Motor neuron (in vitro differentiated cells): ENCODE measurements at regions of chr21 and their contacts with region 1.

Region 1: DNA sequence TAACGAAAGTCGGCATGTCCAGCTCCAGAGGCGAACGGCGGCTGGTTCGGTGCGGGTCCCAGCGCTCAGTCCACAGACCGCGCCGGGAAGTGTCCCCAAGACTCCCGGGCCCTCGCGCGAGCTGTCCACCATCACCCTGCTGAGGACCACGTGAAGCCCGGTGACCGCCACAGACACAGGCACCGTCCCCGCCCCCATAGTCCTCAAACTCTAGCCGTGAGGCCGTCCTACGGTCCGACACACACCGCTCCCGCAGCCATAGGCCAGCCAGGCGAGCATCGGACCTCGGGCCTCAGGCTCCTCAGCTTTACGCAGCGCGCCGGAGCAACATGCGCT is 535 bp downstream of the SETD4 start:
- ATAC-seq: peak; percentile 54 to 71 (median 66)
- H3K4me3 ChIP-seq: peak overlapping the region; percentile 48 to 80 (median 63)
- H3K27ac ChIP-seq: peak overlapping the region; percentile 83 to 89
- H3K4me1 ChIP-seq: peaks cover 5 to 11% of the 10 kb centered on the region in 2 donors

Region 2: GRCh38 chr21:36113647-36114428 is 54.0 kb after region 1 on chr21:
- in situ Hi-C with region 1: loop called in 1 of 9 experiments (anchors 10 kb)
- ATAC-seq: no peak
- H3K4me3 ChIP-seq: no peak overlapping the region
- H3K27ac ChIP-seq: no peak overlapping the region
- H3K4me1 ChIP-seq: no peaks in the 10 kb centered on the region

Region 3: GRCh38 chr21:36563341-36563926 is 503.6 kb after region 1 on chr21:
- in situ Hi-C with region 1: no loop called
- ATAC-seq: peak in 1 of 8 experiments; percentile 11
- H3K4me3 ChIP-seq: no peak overlapping the region
- H3K27ac ChIP-seq: no peak overlapping the region
- H3K4me1 ChIP-seq: peaks cover 26 to 29% of the 10 kb centered on the region in 2 donors